Activated CD8-positive, alpha-beta T cell treated with anti-CD3 and anti-CD28 coated beads, Interleukin-2, amount 10 ng/mL, durations not matched to agents 7 days and 5 days (primary cell): ENCODE measurements at regions of chr18 and their contacts with region 1.

Region 1: GRCh38 chr18:42053188-42053781 is 98.3 kb downstream of the PIK3C3 start:
- DNase-seq: peak; percentile 72
- ATAC-seq: peak; percentile 79
- H3K4me3 Mint-ChIP-seq: no peak overlapping the region
- H3K27ac Mint-ChIP-seq: no peak overlapping the region
- H3K4me1 Mint-ChIP-seq: peaks cover 4% of the 10 kb centered on the region
- H3K27me3 Mint-ChIP-seq: no peaks in the 10 kb centered on the region

Region 2: GRCh38 chr18:42064109-42064508 is 10.8 kb after region 1 on chr18:
- CTCF ChIA-PET with region 1: interaction called, 28 read pairs
- POLR2A ChIA-PET with region 1: interaction called, 4 read pairs
- DNase-seq: no peak
- ATAC-seq: no peak
- H3K4me3 Mint-ChIP-seq: no peak overlapping the region
- H3K27ac Mint-ChIP-seq: no peak overlapping the region
- H3K4me1 Mint-ChIP-seq: no peaks in the 10 kb centered on the region
- H3K27me3 Mint-ChIP-seq: no peaks in the 10 kb centered on the region

Region 3: DNA sequence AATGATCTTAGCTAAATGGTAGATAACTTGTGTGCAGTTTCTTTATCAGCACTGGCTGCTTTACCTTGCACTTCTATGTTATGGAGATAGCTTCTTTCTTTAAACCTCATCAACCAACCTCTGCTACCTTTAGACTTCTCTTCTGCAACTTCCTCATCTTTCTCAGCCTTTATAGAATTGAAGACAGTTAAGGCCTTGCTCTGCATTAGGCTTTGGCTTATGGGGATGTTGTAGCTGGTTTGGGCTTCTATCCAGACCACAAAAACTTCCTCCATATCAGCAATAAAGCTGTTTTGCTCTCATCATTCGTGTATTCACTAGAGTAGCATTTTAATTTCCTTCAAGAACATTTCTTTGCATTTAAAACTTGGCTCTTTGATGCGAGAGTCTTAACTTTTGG is 25.4 kb after region 1 on chr18:
- CTCF ChIA-PET with region 1: interaction called, 15 read pairs
- POLR2A ChIA-PET with region 1: no interaction called
- DNase-seq: no peak
- ATAC-seq: no peak
- H3K4me3 Mint-ChIP-seq: no peak overlapping the region
- H3K27ac Mint-ChIP-seq: no peak overlapping the region
- H3K4me1 Mint-ChIP-seq: peaks cover 12% of the 10 kb centered on the region
- H3K27me3 Mint-ChIP-seq: no peaks in the 10 kb centered on the region

Region 4: DNA sequence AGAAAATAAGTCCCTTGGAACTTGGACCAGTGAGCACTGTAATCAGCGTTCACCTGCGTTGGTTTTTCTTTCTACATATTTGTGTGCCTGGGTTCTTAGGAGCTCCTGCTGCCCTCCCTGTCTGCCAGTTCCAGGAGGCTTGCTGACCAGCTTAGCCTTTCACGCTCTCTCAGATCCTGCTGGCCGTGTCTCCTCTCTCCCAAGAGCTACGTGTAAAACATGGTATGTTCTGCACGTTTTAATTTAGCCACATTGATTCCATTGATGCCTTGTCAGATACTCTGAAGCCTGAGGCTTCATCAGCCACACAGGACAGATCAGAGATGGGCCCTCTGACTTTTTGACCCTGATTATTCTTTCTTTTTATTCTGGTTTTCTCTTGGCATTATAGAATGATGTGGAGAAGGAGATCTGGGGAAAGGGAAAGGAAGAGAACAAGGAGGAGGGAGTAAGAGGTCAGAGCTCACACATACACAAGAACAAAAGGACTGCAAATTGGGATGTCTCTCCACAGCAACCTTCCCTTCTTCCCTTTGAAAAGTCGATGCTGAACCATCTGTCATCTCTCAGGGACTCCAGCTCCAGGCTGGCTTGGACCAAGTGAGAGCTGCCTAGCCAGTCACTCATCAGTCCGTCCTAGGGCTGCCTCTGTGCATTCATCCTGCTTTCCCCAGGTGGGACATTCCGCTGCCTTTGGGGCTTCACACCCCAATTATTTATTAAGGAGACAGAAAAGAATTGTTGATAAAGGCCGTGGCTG is 54.6 kb after region 1 on chr18:
- CTCF ChIA-PET with region 1: interaction called, 33 read pairs
- POLR2A ChIA-PET with region 1: no interaction called
- DNase-seq: no peak
- ATAC-seq: no peak
- H3K4me3 Mint-ChIP-seq: no peak overlapping the region
- H3K27ac Mint-ChIP-seq: no peak overlapping the region
- H3K4me1 Mint-ChIP-seq: peaks cover 2% of the 10 kb centered on the region
- H3K27me3 Mint-ChIP-seq: no peaks in the 10 kb centered on the region